ENCODE measurements at regions of chr1 and their contacts with region 1.

Region 1: DNA sequence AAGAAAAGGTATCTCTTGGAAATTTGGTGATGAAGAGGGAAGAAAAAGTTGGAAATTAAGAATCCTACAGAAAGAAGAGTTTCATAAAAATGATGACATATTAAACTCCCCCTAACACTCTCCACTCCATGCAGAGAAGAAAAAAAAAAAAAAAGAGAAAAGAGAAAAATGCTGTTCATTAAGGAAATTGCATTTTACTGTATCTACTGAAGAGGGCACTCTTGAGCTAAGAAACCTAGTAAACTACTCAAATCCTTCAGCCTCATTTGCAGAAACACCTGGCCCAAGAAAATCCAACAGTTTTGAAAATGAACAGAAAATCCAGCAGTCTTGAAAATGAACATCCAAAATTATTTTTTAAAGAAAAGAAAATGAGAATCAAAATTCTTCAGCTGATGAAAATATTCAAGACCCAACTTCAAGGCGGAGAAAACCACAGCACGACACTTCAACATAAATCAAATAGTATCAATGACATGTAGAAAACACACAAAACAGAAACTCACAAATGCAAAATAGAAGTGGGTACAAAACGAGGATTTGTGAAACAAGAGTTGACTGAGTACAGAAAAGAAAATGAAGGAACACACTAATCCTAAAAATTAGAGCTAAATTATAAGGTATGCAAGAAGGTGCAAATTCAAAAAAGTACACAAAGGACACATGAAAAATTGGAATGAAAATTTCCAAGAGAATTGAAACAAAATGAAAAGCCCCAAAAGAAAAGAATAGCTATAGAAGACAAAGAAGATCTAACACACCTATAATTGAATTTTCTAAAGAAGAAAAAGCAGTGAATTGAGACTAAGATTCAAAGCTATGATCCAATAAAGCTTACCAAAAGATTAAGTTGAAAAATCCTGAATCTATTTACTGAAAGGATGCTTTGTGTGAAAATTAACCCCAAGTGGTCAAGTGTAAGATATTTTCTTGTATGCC is 73.2 kb upstream of the DNAJC6 start:
- H3K4me3 ChIP-seq: no peak overlapping the region
- H3K27ac ChIP-seq: no peak overlapping the region
- H3K4me1 ChIP-seq: no peaks in the 10 kb centered on the region
- CTCF ChIP-seq: no peak

Region 2: DNA sequence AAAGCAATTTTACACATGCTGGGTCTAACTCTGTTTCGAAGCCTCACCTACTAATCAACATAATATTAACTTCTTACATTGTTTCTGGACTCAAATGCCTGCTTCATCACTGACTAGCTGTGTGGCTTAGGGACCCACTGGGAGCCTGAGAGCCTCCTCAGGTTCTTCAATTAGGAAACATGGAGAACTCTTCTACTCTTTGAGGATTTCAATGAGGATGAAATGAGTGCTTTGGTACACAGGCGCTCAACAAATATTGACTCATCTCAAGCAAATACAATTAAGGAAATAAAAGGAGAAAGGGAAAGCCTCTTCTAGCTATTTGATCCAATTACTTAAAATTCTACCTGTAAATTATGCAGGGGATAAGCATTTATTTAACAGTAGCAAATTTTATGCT is 185.4 kb before region 1 on chr1:
- CTCF ChIA-PET with region 1: no interaction called
- POLR2A ChIA-PET with region 1: no interaction called
- H3K4me3 ChIP-seq: no peak overlapping the region
- H3K27ac ChIP-seq: no peak overlapping the region
- H3K4me1 ChIP-seq: no peaks in the 10 kb centered on the region
- CTCF ChIP-seq: no peak

Region 3: GRCh38 chr1:65216989-65217388 is 19.1 kb before region 1 on chr1:
- CTCF ChIA-PET with region 1: interaction called, 10 read pairs
- POLR2A ChIA-PET with region 1: interaction called, 3 read pairs
- H3K4me3 ChIP-seq: no peak overlapping the region
- H3K27ac ChIP-seq: no peak overlapping the region
- H3K4me1 ChIP-seq: no peaks in the 10 kb centered on the region
- CTCF ChIP-seq: no peak

Region 4: DNA sequence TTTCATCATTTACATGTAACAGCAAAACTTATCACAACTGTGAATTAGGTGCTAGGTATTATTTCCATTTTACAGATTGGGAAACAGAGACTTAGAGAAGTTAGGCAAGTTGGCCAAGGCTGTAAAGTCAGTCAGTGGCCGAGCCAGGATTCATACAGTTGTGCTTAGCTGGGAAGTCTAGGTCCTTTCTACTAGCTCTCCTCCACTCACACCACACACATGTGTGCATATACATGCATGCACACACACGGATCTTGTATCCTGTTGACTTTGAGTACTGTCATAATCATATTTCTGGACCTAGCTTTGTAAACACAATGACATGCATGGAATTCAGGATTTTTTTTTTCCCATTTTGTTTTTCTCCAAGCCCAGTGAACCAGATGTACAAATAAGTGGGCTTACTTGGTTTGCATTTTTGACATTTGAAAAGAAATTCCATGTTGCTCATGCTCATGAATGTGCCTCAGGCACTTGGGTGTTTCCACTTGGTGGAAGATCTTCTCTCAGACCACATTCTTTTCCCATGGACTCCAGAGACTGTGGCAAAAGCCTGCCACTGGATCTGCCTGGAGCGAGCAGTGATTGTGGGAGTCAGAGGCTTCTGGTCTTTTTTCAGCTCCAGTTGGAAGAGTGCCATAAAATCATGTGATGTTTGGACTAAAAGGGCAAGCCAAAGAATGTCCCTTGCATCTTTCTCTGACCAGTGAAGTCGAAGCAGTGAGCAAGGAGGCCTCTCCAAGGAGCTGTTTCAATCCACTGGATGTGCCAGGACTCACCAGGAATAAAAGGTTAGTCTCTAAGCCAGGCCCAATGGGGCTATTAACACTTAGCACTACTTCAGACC is 11.6 kb after region 1 on chr1:
- CTCF ChIA-PET with region 1: interaction called, 11 read pairs
- POLR2A ChIA-PET with region 1: interaction called, 3 read pairs
- H3K4me3 ChIP-seq: no peak overlapping the region
- H3K27ac ChIP-seq: no peak overlapping the region
- H3K4me1 ChIP-seq: no peaks in the 10 kb centered on the region
- CTCF ChIP-seq: no peak

Region 5: DNA sequence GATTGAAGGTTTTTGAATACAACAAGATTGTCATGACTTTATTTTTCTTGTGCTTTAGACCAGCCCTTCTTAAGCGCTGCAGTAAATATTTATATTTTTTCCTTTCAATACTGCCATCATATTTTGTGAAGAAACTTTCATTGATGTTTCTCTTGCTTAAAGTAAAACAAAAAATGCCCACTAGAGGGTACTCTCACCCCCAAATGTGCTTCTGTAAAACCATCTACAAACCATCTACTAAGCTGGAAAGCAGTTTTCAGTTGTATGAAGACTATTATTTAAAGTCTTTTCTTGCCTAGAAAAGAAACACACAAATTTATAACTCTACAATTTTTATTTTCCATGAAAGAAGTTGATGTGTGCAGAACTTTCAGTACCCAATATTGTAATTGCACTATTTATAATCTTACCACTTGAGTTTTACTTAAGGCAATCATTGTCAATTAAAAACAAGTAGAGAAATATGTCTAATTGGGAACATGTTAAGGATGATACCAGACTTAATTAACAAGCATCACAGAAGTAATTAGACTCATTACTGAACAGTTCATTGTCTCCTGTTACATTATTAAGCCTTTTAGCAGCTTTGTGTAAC is 195.1 kb after region 1 on chr1:
- CTCF ChIA-PET with region 1: interaction called, 19 read pairs
- POLR2A ChIA-PET with region 1: no interaction called
- H3K4me3 ChIP-seq: no peak overlapping the region
- H3K27ac ChIP-seq: no peak overlapping the region
- H3K4me1 ChIP-seq: no peaks in the 10 kb centered on the region
- CTCF ChIP-seq: 0 out of 2 replicates have a peak, but pooled peaks have one; percentile 7

Region 6: GRCh38 chr1:65459397-65459768 is 223.2 kb after region 1 on chr1:
- CTCF ChIA-PET with region 1: interaction called, 14 read pairs
- POLR2A ChIA-PET with region 1: no interaction called
- H3K4me3 ChIP-seq: no peak overlapping the region
- H3K27ac ChIP-seq: no peak overlapping the region
- H3K4me1 ChIP-seq: no peaks in the 10 kb centered on the region
- CTCF ChIP-seq: no peak

Region 7: DNA sequence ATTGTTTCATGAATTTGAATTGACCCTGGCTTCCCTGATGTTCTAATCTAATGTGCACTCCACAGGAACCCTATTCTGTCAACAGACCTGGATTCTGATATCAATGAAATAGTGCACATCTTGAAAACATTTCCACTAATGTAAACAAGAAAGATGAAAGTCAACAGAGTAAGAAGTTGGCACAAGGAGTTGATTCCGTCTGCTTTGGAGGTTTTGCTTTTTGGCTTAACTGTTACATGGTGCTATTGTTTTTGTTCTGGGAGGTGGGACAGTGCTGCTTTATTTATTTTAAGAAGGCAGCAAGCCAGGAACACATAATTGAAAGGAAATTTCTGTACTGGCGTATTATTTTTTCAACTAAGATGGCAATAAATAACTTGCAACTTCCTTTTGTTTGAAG is 257.7 kb after region 1 on chr1:
- CTCF ChIA-PET with region 1: no interaction called
- POLR2A ChIA-PET with region 1: no interaction called
- H3K4me3 ChIP-seq: no peak overlapping the region
- H3K27ac ChIP-seq: no peak overlapping the region
- H3K4me1 ChIP-seq: no peaks in the 10 kb centered on the region
- CTCF ChIP-seq: no peak

Region 8: DNA sequence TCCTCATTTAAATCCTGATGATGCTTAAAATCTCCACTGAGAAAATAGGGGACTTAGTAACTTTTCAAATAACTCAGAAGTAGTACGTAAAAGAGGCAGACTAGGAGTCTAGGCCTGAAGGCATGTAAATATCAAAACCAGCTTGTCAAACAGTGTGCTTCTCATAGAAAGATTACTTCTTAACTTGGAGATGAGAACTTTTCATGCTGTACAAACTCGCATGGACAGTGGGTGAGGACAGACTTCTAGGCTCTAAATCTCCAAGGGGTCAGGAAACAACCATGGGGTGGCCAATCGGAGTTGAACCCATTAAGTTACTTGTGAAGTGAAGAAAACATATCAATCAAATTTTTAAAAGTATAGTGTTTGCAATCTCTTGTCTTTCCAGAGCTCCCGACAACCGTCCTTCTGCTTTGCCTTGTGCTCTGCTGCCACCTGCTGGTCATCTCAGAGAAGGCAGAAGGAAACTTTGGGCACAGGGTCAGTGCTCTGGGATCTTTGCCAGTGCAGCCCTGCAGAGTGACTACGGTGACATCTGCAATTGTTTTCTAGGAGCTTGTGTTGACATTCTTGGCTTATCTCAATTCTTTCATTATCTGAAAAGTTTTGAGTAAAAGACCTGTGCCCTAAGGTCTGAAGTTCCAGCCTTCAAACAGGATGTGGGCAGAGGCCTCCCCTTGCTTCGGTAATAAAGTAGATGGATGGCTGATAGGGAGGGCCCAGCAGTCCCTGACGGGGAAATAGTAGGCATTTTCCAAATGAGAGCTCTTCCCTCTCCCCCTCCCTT is 451.5 kb after region 1 on chr1:
- CTCF ChIA-PET with region 1: interaction called, 59 read pairs
- POLR2A ChIA-PET with region 1: interaction called, 4 read pairs
- H3K4me3 ChIP-seq: no peak overlapping the region
- H3K27ac ChIP-seq: no peak overlapping the region; the same call in 1 of the 2 replicates
- H3K4me1 ChIP-seq: 0 out of 2 replicates have a peak, but pooled peaks cover 2% of the 10 kb centered on the region
- CTCF ChIP-seq: peak; percentile 84